ENCODE measurements at regions of chr9 and their contacts with region 1.

Region 1: GRCh38 chr9:36023260-36024048 is 13.3 kb upstream of the RECK start:
- DNase-seq: peak; percentile 74
- ATAC-seq: peak; percentile 97
- H3K4me3 ChIP-seq: no peak overlapping the region
- H3K27ac ChIP-seq: no peak overlapping the region
- H3K4me1 ChIP-seq: no peaks in the 10 kb centered on the region
- H3K27me3 ChIP-seq: peaks cover 3% of the 10 kb centered on the region; the same call in 1 of the 2 replicates
- CTCF ChIP-seq: no peak

Region 2: DNA sequence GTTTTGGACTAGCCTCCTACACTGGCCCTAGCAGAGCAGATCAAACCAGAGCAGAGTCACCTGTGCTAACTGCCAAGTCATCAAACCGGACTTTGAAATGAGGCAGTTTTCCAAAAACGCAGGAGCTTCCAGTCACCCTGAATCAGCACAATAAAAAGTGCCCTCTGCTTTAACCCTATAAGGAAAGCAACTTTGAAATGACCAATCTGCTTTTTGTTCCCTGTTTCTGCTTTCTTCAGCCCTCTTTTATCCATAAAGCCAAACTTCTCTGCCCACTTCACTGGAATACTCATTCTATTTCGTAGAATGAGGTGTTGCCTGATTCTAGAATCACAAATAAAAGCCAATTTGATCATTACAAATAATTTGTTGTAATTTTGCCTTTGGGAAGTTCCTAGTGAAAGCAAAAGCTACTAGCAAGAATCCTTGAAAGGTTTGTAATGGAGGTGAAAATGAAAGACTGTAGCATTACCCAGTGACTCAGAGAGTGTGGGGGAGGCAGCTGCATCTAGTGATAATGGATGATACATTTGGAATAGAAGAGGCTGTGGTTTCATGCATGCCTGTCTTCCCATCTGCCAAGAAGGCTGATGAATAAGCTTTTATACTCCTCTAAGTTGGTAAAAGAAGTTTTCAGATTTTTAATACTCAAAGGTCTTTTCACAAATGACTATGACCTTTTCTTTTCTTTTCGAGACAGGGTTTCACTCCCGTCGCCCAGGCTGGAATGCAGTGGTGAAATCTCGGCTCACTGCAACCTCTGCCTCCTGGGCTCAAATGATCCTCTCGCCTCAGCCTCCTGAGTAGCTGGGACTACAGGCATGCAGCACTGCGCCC is 99.3 kb before region 1 on chr9:
- CTCF ChIA-PET with region 1: no interaction called
- POLR2A ChIA-PET with region 1: no interaction called
- in situ Hi-C with region 1: loop called (anchors 5 kb)
- intact Hi-C with region 1: no loop called
- DNase-seq: no peak
- ATAC-seq: peak; percentile 83
- H3K4me3 ChIP-seq: no peak overlapping the region
- H3K27ac ChIP-seq: peak overlapping the region; percentile 46; the same call in 1 of the 2 replicates
- H3K4me1 ChIP-seq: peaks cover 5% of the 10 kb centered on the region
- H3K27me3 ChIP-seq: no peaks in the 10 kb centered on the region
- CTCF ChIP-seq: no peak

Region 3: GRCh38 chr9:35981699-35982098 is 41.8 kb before region 1 on chr9:
- CTCF ChIA-PET with region 1: interaction called, 4 read pairs
- POLR2A ChIA-PET with region 1: no interaction called
- in situ Hi-C with region 1: loop called (anchors 5 kb)
- intact Hi-C with region 1: no loop called
- DNase-seq: no peak
- ATAC-seq: no peak
- H3K4me3 ChIP-seq: no peak overlapping the region
- H3K27ac ChIP-seq: no peak overlapping the region
- H3K4me1 ChIP-seq: no peaks in the 10 kb centered on the region
- H3K27me3 ChIP-seq: peaks cover 81% of the 10 kb centered on the region
- CTCF ChIP-seq: no peak

Region 4: GRCh38 chr9:36036780-36037548 is 13.5 kb after region 1 on chr9 and contains the start of gene RECK:
- CTCF ChIA-PET with region 1: interaction called, 15 read pairs
- POLR2A ChIA-PET with region 1: no interaction called
- in situ Hi-C with region 1: no loop called
- intact Hi-C with region 1: no loop called
- DNase-seq: peak; percentile 30
- ATAC-seq: peak; percentile 98
- H3K4me3 ChIP-seq: peak within 1 kb of the TSS; percentile 61 to 75
- H3K27ac ChIP-seq: peak within 1 kb of the TSS; percentile 82
- H3K4me1 ChIP-seq: peaks cover 9% of the 10 kb centered on the region
- H3K27me3 ChIP-seq: peaks cover 7% of the 10 kb centered on the region
- CTCF ChIP-seq: no peak
- total RNA-seq, gene RECK: 13.2 TPM